ENCODE measurements at regions of chr9 and their contacts with region 1.

Region 1: GRCh38 chr9:134163353-134164196 is 789 bp downstream of the RNU6ATAC start:
- DNase-seq: peak; percentile 84
- ATAC-seq: peak; percentile 15
- H3K4me3 ChIP-seq: peak overlapping the region in 1 of 5 experiments; percentile 15
- H3K4me3 Mint-ChIP-seq: no peak overlapping the region
- H3K27ac ChIP-seq: no peak overlapping the region
- H3K27ac Mint-ChIP-seq: peak overlapping the region; percentile 37
- H3K4me1 ChIP-seq: peaks cover 9 to 13% of the 10 kb centered on the region in 2 donors
- H3K4me1 Mint-ChIP-seq: peaks cover 12% of the 10 kb centered on the region
- H3K27me3 ChIP-seq: no peaks in the 10 kb centered on the region
- H3K27me3 Mint-ChIP-seq: no peaks in the 10 kb centered on the region
- CTCF ChIP-seq: peak; percentile 55

Region 2: GRCh38 chr9:133609311-133610098 is 554.1 kb before region 1 on chr9 and contains the start of gene FAM163B:
- CTCF ChIA-PET with region 1: no interaction called
- POLR2A ChIA-PET with region 1: interaction called, 10 read pairs
- intact Hi-C with region 1: no loop called
- DNase-seq: peak; percentile 21
- ATAC-seq: no peak
- H3K4me3 ChIP-seq: no peak within 1 kb of the TSS
- H3K4me3 Mint-ChIP-seq: no peak within 1 kb of the TSS
- H3K27ac ChIP-seq: no peak within 1 kb of the TSS
- H3K27ac Mint-ChIP-seq: no peak within 1 kb of the TSS
- H3K4me1 ChIP-seq: no peaks in the 10 kb centered on the region
- H3K4me1 Mint-ChIP-seq: peaks cover 3% of the 10 kb centered on the region
- H3K27me3 ChIP-seq: peaks cover 0 to 42% (median 8%) of the 10 kb centered on the region in 4 experiments
- H3K27me3 Mint-ChIP-seq: peaks cover 48% of the 10 kb centered on the region
- CTCF ChIP-seq: no peak
- total RNA-seq, gene FAM163B: not detected in 2 replicates

Region 3: DNA sequence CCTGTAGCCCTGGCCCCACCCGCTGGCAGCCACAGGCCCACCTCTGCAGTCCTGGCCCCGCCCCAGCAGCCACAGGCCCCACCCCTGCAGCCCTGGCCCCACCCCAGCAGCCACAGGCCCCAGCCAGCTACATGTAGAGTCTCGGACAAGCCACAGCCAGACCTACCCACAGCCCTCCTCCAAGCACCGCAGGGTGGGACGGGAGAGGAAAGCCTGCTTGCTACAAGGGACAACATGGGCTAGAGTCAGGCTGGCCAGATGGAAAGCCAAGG is 375.9 kb before region 1 on chr9:
- CTCF ChIA-PET with region 1: no interaction called
- POLR2A ChIA-PET with region 1: interaction called, 11 read pairs
- intact Hi-C with region 1: no loop called
- DNase-seq: peak; percentile 70
- ATAC-seq: peak; percentile 73
- H3K4me3 ChIP-seq: peak overlapping the region in 1 of 5 experiments; percentile 23
- H3K4me3 Mint-ChIP-seq: peak overlapping the region; percentile 84
- H3K27ac ChIP-seq: peak overlapping the region; percentile 87 to 95
- H3K27ac Mint-ChIP-seq: peak overlapping the region; percentile 97
- H3K4me1 ChIP-seq: peaks cover 74 to 78% of the 10 kb centered on the region in 2 donors
- H3K4me1 Mint-ChIP-seq: peaks cover 86% of the 10 kb centered on the region
- H3K27me3 ChIP-seq: no peaks in the 10 kb centered on the region
- H3K27me3 Mint-ChIP-seq: no peaks in the 10 kb centered on the region
- CTCF ChIP-seq: no peak

Region 4: GRCh38 chr9:134010310-134011173 is 153.0 kb before region 1 on chr9:
- CTCF ChIA-PET with region 1: no interaction called
- POLR2A ChIA-PET with region 1: no interaction called
- intact Hi-C with region 1: no loop called
- DNase-seq: no peak
- ATAC-seq: no peak
- H3K4me3 ChIP-seq: no peak overlapping the region
- H3K4me3 Mint-ChIP-seq: no peak overlapping the region
- H3K27ac ChIP-seq: no peak overlapping the region
- H3K27ac Mint-ChIP-seq: no peak overlapping the region
- H3K4me1 ChIP-seq: no peaks in the 10 kb centered on the region
- H3K4me1 Mint-ChIP-seq: no peaks in the 10 kb centered on the region
- H3K27me3 ChIP-seq: peaks cover 0 to 16% (median 0%) of the 10 kb centered on the region in 4 experiments
- H3K27me3 Mint-ChIP-seq: peaks cover 16% of the 10 kb centered on the region
- CTCF ChIP-seq: no peak

Region 5: DNA sequence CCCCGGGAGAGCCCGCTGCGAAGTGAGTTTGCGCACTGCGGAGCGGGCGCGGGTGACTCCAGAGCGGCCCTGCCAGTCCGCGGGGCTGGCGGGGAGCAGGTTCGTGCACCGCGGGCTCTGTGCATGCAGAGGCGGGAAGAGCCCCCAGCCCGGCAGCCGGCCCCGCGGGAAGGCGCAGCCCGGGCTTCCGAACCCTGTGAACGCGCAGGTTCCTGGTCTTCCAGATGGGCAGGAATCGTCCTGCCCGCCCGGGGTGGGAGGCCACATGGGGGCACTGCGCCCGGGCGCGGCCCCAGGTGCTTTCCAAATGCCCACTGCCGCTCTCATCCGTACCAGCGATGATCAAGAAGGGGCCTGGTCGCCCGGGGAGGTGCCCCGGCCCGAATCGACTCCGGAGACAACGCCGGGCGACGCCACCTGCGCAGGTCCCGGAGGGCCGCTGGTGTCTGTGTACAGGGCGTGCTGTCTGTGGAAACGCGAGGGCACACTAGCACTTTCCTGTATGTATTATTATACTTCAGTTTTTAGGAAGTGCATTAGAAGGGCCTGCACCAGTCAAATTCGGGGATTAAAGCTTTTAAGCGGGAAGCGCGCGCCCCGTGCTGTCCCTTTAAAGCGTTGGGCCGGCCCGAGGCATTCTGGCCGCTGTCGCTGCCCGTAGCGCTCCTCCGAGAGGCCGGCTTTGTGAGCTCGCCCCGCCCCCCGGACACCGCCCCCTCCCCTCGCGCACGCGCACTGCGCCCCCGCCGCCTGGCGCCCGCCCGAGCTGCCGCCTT is 28.0 kb before region 1 on chr9 and contains the start of gene WDR5:
- CTCF ChIA-PET with region 1: interaction called, 11 read pairs
- POLR2A ChIA-PET with region 1: interaction called, 7 read pairs
- intact Hi-C with region 1: loop called (anchors 1 kb)
- DNase-seq: peak; percentile 93
- ATAC-seq: peak; percentile 86
- H3K4me3 ChIP-seq: peak within 1 kb of the TSS; percentile 46 to 98 (median 92)
- H3K4me3 Mint-ChIP-seq: peak within 1 kb of the TSS; percentile 91
- H3K27ac ChIP-seq: peak within 1 kb of the TSS; percentile 56 to 85
- H3K27ac Mint-ChIP-seq: peak within 1 kb of the TSS; percentile 93
- H3K4me1 ChIP-seq: peaks cover 22 to 30% of the 10 kb centered on the region in 2 donors
- H3K4me1 Mint-ChIP-seq: peaks cover 36% of the 10 kb centered on the region
- H3K27me3 ChIP-seq: no peaks in the 10 kb centered on the region
- H3K27me3 Mint-ChIP-seq: no peaks in the 10 kb centered on the region
- CTCF ChIP-seq: peak; percentile 37
- total RNA-seq, gene WDR5: 21.1 and 23.8 TPM in 2 replicates

Region 6: DNA sequence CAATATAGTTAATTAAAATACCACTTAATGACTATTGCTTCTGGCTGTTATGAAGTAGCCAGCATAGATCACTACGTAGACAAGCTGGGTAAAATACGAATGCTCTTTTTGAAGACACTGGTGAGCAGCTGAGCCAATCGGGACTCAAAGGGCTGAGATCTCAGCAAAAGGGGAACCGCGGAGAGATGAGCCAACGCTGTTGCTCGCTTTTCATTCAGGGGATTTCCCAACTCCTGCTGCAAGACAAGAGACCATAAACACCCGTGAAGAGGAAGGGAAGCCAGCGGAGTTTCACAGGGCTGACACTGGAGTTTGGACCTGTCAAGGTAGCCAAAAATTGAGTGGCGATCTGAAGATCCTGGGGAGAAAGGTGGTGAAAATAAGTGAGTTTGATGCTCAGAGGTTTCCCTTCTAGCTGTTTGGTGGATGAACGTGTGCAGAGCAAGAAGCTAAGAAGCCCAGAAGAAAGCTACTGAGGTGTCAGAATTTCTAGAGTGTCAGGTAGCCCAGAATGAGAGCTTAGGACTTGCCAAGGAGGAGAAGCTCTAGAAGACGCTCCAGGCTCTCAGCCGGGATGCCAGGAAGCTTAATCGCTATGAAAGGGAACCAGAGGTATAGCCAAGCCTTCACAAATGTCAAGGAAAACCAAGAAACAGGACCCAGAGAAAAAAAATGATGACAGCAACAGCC is 80.3 kb after region 1 on chr9:
- CTCF ChIA-PET with region 1: no interaction called
- POLR2A ChIA-PET with region 1: no interaction called
- intact Hi-C with region 1: no loop called
- DNase-seq: peak; percentile 91
- ATAC-seq: peak; percentile 96
- H3K4me3 ChIP-seq: peak overlapping the region; percentile 30 to 56 (median 49)
- H3K4me3 Mint-ChIP-seq: peak overlapping the region; percentile 79
- H3K27ac ChIP-seq: peak overlapping the region; percentile 67 to 90
- H3K27ac Mint-ChIP-seq: peak overlapping the region; percentile 92
- H3K4me1 ChIP-seq: peaks cover 29 to 50% of the 10 kb centered on the region in 2 donors
- H3K4me1 Mint-ChIP-seq: peaks cover 48% of the 10 kb centered on the region
- H3K27me3 ChIP-seq: peaks cover 0 to 4% (median 0%) of the 10 kb centered on the region in 4 experiments
- H3K27me3 Mint-ChIP-seq: no peaks in the 10 kb centered on the region
- CTCF ChIP-seq: no peak

Region 7: GRCh38 chr9:134325817-134326723 is 162.5 kb after region 1 on chr9 and contains the start of gene RXRA:
- CTCF ChIA-PET with region 1: interaction called, 3 read pairs
- POLR2A ChIA-PET with region 1: no interaction called
- intact Hi-C with region 1: loop called (anchors 2 kb)
- DNase-seq: peak; percentile 83
- ATAC-seq: peak; percentile 77
- H3K4me3 ChIP-seq: peak within 1 kb of the TSS; percentile 17 to 85 (median 78)
- H3K4me3 Mint-ChIP-seq: peak within 1 kb of the TSS; percentile 82
- H3K27ac ChIP-seq: no peak within 1 kb of the TSS
- H3K27ac Mint-ChIP-seq: peak within 1 kb of the TSS; percentile 68
- H3K4me1 ChIP-seq: peaks cover 11 to 20% of the 10 kb centered on the region in 2 donors
- H3K4me1 Mint-ChIP-seq: peaks cover 17% of the 10 kb centered on the region
- H3K27me3 ChIP-seq: peaks cover 0 to 13% (median 3%) of the 10 kb centered on the region in 4 experiments
- H3K27me3 Mint-ChIP-seq: no peaks in the 10 kb centered on the region
- CTCF ChIP-seq: no peak
- total RNA-seq, gene RXRA: 6.7 and 6.8 TPM in 2 replicates

Region 8: DNA sequence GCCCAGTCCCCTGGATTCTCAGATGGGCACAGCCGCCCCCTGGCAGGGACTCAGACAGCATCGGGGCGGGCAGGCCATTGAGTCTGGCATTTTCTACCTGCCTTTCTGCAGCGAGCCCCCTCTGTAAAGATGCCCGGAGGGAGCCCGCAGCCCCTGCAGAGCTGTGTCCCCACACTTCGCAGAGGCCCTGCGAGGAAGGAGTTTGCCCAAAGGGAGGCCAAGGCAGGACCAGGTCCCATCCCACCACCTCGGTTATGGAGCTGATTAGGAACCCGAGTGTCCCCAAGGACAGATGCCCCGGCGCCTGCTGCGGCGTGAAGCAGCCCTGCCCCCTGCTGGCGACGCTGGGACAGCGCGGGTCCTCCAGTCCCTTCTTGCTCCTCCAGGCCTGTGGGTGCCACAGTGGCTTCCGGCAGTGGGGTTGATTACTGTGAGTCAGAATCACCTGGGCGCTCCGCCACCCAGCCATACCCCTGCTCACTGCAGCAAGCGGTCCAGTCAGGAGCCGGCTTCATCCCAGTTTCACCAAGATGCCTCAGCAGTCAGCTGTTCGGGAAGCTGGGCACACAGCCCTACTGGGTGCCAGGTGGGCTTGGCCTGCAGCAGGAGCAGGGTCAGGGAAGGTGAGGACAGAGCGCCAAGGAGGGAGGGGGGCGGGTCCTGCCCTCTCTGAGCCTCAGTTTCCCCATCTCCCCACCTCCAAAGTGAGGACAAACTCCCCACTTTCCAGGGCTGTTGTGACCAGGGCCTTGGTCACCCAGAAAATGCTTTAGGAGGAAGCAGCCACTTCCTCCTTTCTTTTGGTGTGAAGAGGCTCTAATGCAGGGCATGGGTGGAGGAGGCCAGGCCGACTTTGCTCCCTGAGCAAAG is 279.8 kb after region 1 on chr9:
- CTCF ChIA-PET with region 1: interaction called, 94 read pairs
- POLR2A ChIA-PET with region 1: no interaction called
- intact Hi-C with region 1: no loop called
- DNase-seq: peak; percentile 89
- ATAC-seq: peak; percentile 97
- H3K4me3 ChIP-seq: no peak overlapping the region
- H3K4me3 Mint-ChIP-seq: no peak overlapping the region
- H3K27ac ChIP-seq: peak overlapping the region in 1 of 2 donors; percentile 25
- H3K27ac Mint-ChIP-seq: peak overlapping the region; percentile 61
- H3K4me1 ChIP-seq: peaks cover 22 to 25% of the 10 kb centered on the region in 2 donors
- H3K4me1 Mint-ChIP-seq: peaks cover 22% of the 10 kb centered on the region
- H3K27me3 ChIP-seq: peaks cover 0 to 30% (median 3%) of the 10 kb centered on the region in 4 experiments
- H3K27me3 Mint-ChIP-seq: peaks cover 16% of the 10 kb centered on the region
- CTCF ChIP-seq: peak; percentile 99

Region 9: DNA sequence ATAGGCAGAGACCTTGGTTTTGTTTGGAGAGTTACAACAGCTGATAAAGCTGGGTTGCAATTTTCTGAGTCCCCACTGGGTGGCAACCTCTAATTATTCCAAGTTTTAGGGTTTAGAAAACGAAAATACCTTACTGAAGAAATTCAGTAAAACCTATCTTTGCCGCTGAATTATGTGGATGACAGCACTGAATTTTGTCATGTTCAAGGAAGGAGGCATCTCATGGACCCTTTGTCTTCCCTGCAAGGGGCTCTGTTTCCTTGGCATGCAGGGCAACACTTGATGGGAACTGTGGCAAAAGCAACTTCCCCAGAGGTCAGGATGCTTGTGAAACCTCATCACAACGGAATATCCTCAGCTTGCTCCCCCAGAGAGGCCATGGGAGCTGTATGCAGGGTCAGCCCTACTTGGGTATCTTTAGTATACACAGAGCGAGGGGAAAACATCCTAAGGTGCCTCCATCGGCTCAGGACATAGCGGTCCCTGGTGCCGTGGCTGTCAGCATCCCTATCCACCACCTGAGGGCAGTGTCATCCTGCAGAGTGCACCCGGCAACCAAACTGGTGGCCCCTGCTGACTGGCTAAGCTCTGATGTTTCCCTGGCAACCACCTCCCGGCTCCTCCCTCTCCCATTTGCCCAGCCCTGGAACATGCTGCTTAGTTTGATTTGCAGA is 285.8 kb after region 1 on chr9:
- CTCF ChIA-PET with region 1: interaction called, 59 read pairs
- POLR2A ChIA-PET with region 1: no interaction called
- intact Hi-C with region 1: no loop called
- DNase-seq: peak; percentile 91
- ATAC-seq: peak; percentile 100
- H3K4me3 ChIP-seq: no peak overlapping the region
- H3K4me3 Mint-ChIP-seq: no peak overlapping the region
- H3K27ac ChIP-seq: no peak overlapping the region
- H3K27ac Mint-ChIP-seq: peak overlapping the region; percentile 46
- H3K4me1 ChIP-seq: peaks cover 0 to 11% of the 10 kb centered on the region in 2 donors
- H3K4me1 Mint-ChIP-seq: peaks cover 18% of the 10 kb centered on the region
- H3K27me3 ChIP-seq: peaks cover 0 to 3% (median 0%) of the 10 kb centered on the region in 4 experiments
- H3K27me3 Mint-ChIP-seq: no peaks in the 10 kb centered on the region
- CTCF ChIP-seq: peak; percentile 81

Measured in B cell (primary cell).